Left lung (tissue), 14 donors: ENCODE measurements at regions of chr10 and their contacts with region 1.

Region 1: DNA sequence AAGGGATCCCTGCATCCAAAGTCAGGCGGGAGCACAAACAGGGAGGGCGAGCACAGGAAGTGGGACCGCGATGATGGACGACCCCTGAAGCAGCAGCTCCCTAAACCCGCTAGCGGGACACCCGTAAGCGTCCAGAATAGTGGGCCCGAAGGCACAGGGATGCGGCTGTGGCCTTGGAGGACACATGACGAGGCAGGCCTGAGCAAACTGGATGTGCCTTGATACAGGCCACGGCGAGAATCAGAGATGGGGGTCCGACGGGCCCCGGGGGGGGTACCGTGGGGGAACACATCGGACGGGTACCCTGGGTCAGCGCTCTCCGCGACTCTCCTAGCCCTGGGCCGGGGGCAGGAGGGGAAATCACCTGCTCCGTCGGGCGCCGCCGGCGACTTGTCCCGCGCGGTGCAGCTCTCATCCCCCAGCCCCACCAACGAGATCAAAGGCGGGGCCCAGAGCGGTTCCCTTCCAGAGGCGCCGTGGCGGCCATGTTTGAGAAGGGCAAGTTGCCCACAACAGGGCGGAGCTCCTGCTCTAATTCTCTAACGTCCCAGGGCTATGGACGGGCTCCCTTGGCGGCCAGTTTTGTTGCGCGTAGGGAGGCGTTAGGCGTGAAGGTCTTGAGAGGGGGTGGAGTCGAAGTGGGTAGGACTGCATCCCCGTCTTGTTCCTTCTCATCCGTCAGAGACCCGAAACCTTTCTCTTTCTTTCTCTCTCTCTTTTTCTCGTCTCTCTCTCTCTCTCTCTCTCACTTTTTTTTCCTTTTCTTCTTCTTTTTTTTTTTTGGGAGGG is at the start of gene CUEDC2:
- DNase-seq: peak; percentile 96 to 99 (median 98)
- ATAC-seq: peak; percentile 91
- H3K4me3 ChIP-seq: peak within 1 kb of the TSS; percentile 88
- H3K27ac ChIP-seq: peak within 1 kb of the TSS; percentile 69 to 84
- H3K4me1 ChIP-seq: peaks cover 13 to 43% of the 10 kb centered on the region in 2 donors
- H3K27me3 ChIP-seq: no peaks in the 10 kb centered on the region
- CTCF ChIP-seq: no peak
- polyA plus RNA-seq, gene CUEDC2: 66.7 to 81.0 (median 75.8) TPM

Region 2: DNA sequence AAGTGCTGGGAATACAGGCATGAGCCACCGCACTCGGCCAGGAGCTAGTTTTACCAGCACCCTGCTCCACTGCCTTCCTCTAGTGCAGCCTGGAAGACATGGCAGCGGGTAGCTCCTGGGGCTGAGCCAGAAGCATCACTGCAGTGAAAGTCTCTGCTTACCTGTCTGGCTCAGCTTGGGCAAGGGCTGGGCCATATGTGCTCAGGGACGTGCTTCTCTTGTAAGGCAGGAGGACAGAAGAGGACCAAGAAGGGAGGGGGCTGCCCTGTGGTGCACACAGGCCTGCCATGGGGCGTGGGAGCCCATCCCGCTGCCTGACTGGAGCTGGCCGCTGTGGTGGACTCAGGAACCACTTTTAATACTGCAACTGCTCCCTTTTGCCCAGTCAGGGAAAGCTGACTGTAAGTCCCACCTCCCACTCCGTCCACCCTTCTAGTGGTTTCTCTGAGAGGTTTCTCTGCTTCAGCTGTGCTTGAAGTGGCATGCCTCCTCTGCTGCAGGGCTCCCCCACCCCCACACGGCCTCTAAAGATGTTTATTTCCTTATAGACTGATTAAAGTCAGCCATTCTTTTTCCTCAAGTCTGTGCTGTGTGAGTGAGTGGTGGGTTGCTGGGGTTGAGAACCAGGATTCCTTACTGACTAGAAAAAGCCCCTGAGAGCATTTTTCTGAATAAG is 44.2 kb after region 1 on chr10:
- intact Hi-C with region 1: loop called in 1 of 2 experiments (anchors 5 kb)
- DNase-seq: peak in 3 of 4 donors; percentile 55 to 71 (median 58)
- ATAC-seq: peak; percentile 76
- H3K4me3 ChIP-seq: no peak overlapping the region
- H3K27ac ChIP-seq: peak overlapping the region; percentile 8 to 39
- H3K4me1 ChIP-seq: peaks cover 3 to 16% of the 10 kb centered on the region in 2 donors
- H3K27me3 ChIP-seq: no peaks in the 10 kb centered on the region
- CTCF ChIP-seq: no peak